ENCODE measurements at regions of chr12 and their contacts with region 1.

Region 1: DNA sequence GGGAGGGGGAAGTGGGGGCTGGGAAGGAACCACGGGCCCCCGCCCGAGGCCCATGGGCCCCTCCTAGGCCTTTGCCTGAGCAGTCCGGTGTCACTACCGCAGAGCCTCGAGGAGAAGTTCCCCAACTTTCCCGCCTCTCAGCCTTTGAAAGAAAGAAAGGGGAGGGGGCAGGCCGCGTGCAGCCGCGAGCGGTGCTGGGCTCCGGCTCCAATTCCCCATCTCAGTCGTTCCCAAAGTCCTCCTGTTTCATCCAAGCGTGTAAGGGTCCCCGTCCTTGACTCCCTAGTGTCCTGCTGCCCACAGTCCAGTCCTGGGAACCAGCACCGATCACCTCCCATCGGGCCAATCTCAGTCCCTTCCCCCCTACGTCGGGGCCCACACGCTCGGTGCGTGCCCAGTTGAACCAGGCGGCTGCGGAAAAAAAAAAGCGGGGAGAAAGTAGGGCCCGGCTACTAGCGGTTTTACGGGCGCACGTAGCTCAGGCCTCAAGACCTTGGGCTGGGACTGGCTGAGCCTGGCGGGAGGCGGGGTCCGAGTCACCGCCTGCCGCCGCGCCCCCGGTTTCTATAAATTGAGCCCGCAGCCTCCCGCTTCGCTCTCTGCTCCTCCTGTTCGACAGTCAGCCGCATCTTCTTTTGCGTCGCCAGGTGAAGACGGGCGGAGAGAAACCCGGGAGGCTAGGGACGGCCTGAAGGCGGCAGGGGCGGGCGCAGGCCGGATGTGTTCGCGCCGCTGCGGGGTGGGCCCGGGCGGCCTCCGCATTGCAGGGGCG is at the start of gene GAPDH:
- DNase-seq: peak; percentile 77
- H3K4me3 ChIP-seq: peak within 1 kb of the TSS; percentile 88
- H3K27me3 ChIP-seq: no peaks in the 10 kb centered on the region
- CTCF ChIP-seq: no peak
- polyA plus RNA-seq, gene GAPDH: 12,114 and 18,709 TPM in 2 replicates

Region 2: DNA sequence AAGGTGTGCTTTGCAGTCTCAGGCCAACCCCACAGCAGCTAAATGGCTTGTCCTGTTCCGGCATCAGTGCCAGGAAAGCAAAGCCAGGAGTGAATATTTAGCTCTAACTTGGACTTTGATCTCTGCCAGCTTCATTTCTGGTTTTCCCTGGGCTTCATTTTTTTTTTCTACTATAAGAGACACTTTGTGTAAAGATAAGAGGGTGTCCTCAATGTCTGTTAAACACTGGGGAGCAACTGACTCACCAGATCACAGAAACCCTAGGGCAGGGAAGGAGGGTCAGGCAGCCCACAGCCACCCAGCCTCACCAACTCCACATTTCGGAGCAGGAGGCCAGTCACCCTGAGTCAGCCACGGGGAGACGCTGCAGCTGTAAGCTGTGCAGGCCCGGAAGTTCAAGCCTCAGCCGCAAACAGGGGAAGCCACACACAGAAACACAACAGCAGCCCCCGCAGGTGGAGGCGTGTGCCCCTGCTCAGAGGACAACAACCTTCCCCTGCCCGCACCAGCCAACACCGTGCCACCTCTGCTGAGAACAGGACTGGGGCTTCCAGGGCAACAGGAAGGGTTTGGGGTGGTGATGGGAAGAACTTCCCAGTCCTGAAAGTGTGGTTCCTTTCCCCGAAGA is 198.5 kb before region 1 on chr12:
- CTCF ChIA-PET with region 1: no interaction called
- POLR2A ChIA-PET with region 1: interaction called, 23 read pairs
- DNase-seq: no peak
- H3K4me3 ChIP-seq: peak overlapping the region; percentile 36
- H3K27me3 ChIP-seq: no peaks in the 10 kb centered on the region
- CTCF ChIP-seq: peak; percentile 75

Region 3: GRCh38 chr12:6438345-6438744 is 95.8 kb before region 1 on chr12:
- CTCF ChIA-PET with region 1: no interaction called
- POLR2A ChIA-PET with region 1: interaction called, 30 read pairs
- DNase-seq: no peak
- H3K4me3 ChIP-seq: no peak overlapping the region
- H3K27me3 ChIP-seq: no peaks in the 10 kb centered on the region
- CTCF ChIP-seq: no peak

Region 4: DNA sequence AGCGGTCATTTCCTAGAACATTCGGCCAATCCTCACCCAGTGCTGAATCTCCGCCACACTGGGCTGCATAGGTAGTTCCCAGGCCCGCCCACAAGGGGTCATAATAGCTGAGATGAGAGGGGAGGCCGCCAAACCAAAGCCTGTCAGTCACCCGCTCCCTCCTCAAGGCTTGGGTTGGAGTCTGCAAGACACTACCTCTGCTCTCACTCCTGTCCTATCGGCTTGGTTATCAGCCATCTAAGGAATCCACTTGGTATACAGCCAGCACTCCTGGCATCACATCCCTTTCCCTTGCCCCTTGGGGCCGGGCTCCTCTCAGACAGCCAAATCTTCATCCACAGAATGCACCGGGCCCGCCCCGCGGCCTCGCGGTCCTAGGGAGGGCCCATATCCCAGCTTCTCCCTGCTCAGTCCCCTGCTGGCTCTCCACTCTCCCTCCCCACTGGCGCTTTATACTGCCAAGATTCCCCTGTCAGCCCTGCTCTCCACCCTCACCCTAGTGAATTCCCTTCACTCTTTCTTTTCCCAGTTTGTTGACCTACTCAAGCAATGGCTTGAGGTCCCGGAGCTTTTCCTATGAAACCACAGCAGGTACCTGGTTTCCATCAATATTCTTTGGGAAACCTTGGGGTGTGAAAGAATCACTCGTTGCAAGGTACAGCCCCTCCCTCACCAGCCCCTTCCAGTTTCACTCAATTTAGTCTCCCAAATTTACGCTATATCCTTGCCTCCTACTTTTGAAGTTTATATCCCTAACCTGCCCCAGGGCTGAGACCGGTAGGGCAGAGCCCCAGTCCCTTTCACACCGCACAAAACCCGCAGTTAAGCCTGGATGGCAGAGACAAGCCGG is 20.3 kb after region 1 on chr12:
- CTCF ChIA-PET with region 1: interaction called, 157 read pairs
- POLR2A ChIA-PET with region 1: interaction called, 24 read pairs
- DNase-seq: no peak
- H3K4me3 ChIP-seq: peak overlapping the region; percentile 68
- H3K27me3 ChIP-seq: no peaks in the 10 kb centered on the region
- CTCF ChIP-seq: peak; percentile 68

Region 5: DNA sequence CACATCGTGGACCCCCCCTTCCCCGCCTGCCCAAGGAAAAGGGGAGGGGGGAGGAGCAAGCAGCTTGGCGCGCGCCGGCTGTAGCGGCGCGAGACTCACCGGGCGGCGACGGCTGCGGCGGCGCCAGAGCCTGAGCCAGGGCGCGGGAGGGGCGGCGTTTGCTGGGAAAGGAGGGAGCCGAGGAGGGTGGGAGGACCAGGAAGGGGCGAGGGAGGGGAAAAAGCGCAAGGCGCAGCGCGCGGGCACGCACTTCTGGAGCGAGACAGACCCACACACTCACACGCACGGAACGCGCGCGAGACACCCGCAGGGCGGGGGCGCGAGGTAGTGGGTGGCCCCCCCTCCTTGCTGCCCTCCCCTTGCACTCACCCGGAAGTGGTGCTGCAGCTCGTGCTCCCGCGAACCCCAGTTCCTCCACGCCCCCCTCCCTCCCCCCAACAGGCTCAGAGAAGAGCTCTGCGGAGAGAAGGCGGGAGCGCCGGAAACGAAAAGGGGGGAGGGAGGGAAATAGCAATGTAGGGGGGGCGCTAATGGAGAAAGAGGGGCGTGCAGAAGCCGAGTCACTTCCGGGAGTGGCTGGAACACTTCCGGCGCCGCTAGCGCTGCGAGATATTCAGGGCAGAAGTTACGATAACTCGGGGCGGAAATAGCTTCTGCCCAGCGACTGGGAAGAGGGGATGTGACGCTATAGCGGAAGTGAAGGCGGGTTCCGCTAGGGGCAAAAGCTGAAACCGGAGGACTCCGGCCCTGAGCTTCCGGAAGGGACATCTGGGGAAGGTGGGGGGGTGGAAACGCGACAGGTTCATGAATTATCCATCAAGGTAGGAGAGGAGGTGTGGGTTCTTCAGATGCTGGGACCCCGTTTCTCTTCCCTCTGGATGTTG is 155.1 kb after region 1 on chr12 and contains the start of gene ZNF384:
- CTCF ChIA-PET with region 1: no interaction called
- POLR2A ChIA-PET with region 1: interaction called, 29 read pairs
- DNase-seq: peak; percentile 97
- H3K4me3 ChIP-seq: peak within 1 kb of the TSS; percentile 83
- H3K27me3 ChIP-seq: no peaks in the 10 kb centered on the region
- CTCF ChIP-seq: 0 out of 2 replicates have a peak, but pooled peaks have one; percentile 6
- polyA plus RNA-seq, gene ZNF384: 38.8 and 57.0 TPM in 2 replicates

Measured in BJ (cell line).